ENCODE measurements at regions of chr11 and their contacts with region 1.

Region 1: DNA sequence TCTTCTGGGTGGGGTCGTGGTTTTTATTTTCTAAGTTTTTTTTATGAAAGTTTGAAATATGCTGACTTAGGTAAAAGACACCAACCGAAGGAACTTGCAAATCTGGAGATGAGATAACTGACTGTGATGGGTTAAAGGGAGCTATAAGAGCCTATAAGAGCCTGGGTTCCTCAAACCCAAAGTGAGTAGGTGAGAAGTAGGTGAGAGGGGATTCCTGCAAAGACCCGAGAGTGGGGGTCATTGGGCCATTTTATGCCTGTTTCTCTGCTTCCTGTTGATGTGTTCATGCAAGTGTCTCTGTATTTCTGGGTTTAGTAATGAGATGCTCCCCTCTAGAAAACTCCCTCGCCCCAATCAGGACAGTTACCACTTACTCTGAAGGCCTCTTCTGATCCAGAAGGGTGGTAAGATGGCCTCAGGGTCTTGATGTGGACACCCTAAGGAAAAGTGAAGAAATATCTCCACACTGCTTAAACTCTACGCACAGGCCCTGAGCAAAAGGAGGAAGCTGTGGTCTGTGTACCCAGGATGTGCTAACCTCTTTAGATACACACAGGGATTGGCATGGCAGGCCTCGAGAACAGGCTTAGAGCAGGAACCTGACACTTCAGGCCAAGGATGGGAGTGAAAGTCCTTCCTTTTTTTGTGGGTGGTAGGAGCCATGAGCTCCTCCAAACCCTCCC is 1.8 kb downstream of the FLI1 start:
- DNase-seq: peak; percentile 83
- H3K4me3 Mint-ChIP-seq: peak overlapping the region; percentile 93
- H3K27ac Mint-ChIP-seq: peak overlapping the region; percentile 92
- H3K4me1 Mint-ChIP-seq: peaks cover 64% of the 10 kb centered on the region
- H3K27me3 Mint-ChIP-seq: peaks cover 19% of the 10 kb centered on the region

Region 2: DNA sequence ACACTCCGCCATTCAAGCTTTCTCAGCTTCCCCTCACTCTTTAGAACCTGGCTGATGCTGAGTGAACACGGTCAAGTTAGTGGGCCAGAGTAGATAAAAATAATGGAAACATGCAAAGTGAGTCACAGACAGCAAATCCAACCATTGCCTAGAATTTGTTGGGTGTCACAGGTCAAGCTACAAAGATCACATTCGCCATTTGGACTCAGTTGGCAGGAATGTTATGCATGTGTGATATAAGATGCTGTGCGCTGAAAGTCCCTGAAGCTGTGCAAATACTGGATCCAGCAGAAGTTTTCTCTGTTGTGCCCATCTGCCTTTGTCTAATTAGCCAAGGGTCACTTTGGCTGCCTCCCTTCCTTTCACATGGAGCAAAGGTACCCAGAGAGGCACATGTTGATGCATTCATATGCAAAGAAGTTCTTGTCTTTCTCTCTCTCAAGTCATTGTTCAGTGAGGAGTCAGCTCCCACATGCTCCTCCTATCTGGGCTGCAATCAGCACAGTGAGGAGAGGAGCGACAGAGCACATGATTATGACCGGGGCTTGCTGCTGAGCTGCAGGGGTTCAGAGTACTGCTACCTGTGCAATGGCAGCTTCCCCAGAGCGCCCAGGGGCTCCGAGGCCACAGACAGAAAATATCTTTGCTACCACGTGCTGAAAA is 37.9 kb after region 1 on chr11:
- intact Hi-C with region 1: loop called (anchors 1 kb)
- DNase-seq: peak; percentile 81
- H3K4me3 Mint-ChIP-seq: peak overlapping the region; percentile 72
- H3K27ac Mint-ChIP-seq: peak overlapping the region; percentile 83
- H3K4me1 Mint-ChIP-seq: peaks cover 77% of the 10 kb centered on the region
- H3K27me3 Mint-ChIP-seq: no peaks in the 10 kb centered on the region

Region 3: GRCh38 chr11:128757235-128757711 is 61.6 kb after region 1 on chr11:
- intact Hi-C with region 1: loop called (anchors 1 kb)
- DNase-seq: peak; percentile 89
- H3K4me3 Mint-ChIP-seq: peak overlapping the region; percentile 37
- H3K27ac Mint-ChIP-seq: peak overlapping the region; percentile 90
- H3K4me1 Mint-ChIP-seq: peaks cover 59% of the 10 kb centered on the region
- H3K27me3 Mint-ChIP-seq: no peaks in the 10 kb centered on the region